Activated T-helper 2 cell treated with anti-CD3 and anti-CD28 coated beads, Interferon-gamma antibody, Interleukin-2, Interleukin-4, amounts not matched to agents 10 μg/mL and 5 μg/mL and 100 μg/mL, durations not matched to agents 14 hours and 24 hours and 36 hours (primary cell): ENCODE measurements at regions of chr11 and their contacts with region 1.

Region 1: DNA sequence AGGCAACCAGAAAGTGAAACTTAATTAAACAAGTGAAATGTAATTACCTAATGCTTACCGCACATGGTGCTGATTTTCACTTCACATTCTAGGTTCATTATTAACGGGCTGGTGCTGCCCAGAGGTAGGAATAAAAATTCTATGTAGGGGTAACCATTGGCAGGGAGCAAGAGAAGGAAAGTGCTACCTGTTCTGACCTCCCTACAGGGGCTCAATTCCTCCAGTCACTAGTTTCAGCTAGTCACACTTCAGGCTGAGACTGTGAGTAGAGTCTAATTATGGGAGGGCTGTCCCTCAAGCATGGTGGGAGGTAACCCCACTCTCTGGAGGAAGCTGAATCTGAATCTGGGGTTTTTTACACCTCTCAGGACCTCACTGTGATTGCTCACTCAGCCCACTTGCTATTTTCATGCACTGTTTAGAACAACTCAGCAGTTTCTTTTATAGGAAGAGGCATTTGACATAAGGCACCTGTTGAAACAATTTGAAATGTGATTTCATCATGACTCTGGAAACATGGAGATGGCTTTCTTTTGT is 75.4 kb downstream of the MAML2 start:
- DNase-seq: no peak
- H3K4me3 Mint-ChIP-seq: no peak overlapping the region
- H3K27ac Mint-ChIP-seq: peak overlapping the region; percentile 72
- H3K4me1 Mint-ChIP-seq: peaks cover 61% of the 10 kb centered on the region
- H3K27me3 Mint-ChIP-seq: no peaks in the 10 kb centered on the region

Region 2: GRCh38 chr11:96242971-96243647 is 24.5 kb before region 1 on chr11:
- intact Hi-C with region 1: no loop called
- DNase-seq: peak; percentile 74
- H3K4me3 Mint-ChIP-seq: peak overlapping the region; percentile 79
- H3K27ac Mint-ChIP-seq: peak overlapping the region; percentile 89
- H3K4me1 Mint-ChIP-seq: peaks cover 46% of the 10 kb centered on the region
- H3K27me3 Mint-ChIP-seq: no peaks in the 10 kb centered on the region

Region 3: GRCh38 chr11:96284917-96285316 is 17.4 kb after region 1 on chr11:
- intact Hi-C with region 1: loop called (anchors 2 kb)
- DNase-seq: no peak
- H3K4me3 Mint-ChIP-seq: no peak overlapping the region
- H3K27ac Mint-ChIP-seq: peak overlapping the region; percentile 64
- H3K4me1 Mint-ChIP-seq: peaks cover 52% of the 10 kb centered on the region
- H3K27me3 Mint-ChIP-seq: no peaks in the 10 kb centered on the region